Activated CD8-positive, alpha-beta memory T cell treated with anti-CD3 and anti-CD28 coated beads, Interleukin-2, amount 10 ng/mL, durations not matched to agents 7 days and 5 days (primary cell): ENCODE measurements at regions of chr16 and their contacts with region 1.

Region 1: GRCh38 chr16:49592546-49593423 is 219.2 kb downstream of the C16orf78 start:
- DNase-seq: peak; percentile 46
- ATAC-seq: peak; percentile 57
- H3K4me3 Mint-ChIP-seq: no peak overlapping the region
- H3K27ac Mint-ChIP-seq: no peak overlapping the region
- H3K4me1 Mint-ChIP-seq: no peaks in the 10 kb centered on the region
- H3K27me3 Mint-ChIP-seq: peaks cover 24% of the 10 kb centered on the region

Region 2: GRCh38 chr16:49407873-49408550 is 184.8 kb before region 1 on chr16:
- CTCF ChIA-PET with region 1: interaction called, 23 read pairs
- DNase-seq: peak; percentile 71
- ATAC-seq: peak; percentile 75
- H3K4me3 Mint-ChIP-seq: no peak overlapping the region
- H3K27ac Mint-ChIP-seq: no peak overlapping the region
- H3K4me1 Mint-ChIP-seq: no peaks in the 10 kb centered on the region
- H3K27me3 Mint-ChIP-seq: peaks cover 4% of the 10 kb centered on the region

Region 3: DNA sequence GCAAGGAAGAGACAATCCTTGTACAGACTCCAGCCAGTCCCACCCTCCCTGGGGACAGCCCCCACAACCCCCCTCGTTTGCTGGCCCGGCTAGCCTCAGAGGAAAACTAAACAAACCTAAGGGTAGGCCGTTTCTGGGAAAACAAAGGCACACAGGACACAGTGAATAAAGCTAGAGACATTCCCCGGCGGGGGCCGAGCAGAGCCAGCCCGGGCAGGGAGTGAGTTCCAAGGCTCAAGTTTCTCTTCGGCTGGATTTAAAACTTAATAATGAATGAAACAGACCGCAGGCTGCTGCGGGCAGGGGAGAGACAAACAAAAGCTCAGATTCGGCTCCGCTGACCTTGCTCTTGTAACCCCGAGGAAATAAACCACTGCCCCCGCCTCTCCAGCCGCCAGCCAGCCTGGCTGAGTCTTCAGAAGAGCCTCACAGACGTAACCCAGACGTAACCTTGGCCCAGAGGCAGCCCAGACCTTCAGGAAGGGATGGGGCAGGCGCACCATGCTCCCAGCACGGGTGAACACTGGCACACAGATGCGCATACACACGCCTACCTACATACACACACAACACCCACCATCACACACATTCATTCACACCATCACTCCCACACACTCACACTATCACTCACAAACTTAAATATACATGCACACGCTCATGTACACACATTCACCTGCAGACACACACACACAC is 47.1 kb after region 1 on chr16:
- CTCF ChIA-PET with region 1: no interaction called
- DNase-seq: no peak
- ATAC-seq: no peak
- H3K4me3 Mint-ChIP-seq: no peak overlapping the region
- H3K27ac Mint-ChIP-seq: no peak overlapping the region
- H3K4me1 Mint-ChIP-seq: no peaks in the 10 kb centered on the region
- H3K27me3 Mint-ChIP-seq: no peaks in the 10 kb centered on the region